MCF 10A (cell line): ENCODE measurements at regions of chr5 and their contacts with region 1.

Region 1: GRCh38 chr5:151651997-151652645 is 34.6 kb downstream of the SPARC start:
- DNase-seq: peak; percentile 94
- H3K4me3 Mint-ChIP-seq: no peak overlapping the region
- H3K27ac Mint-ChIP-seq: no peak overlapping the region
- H3K4me1 Mint-ChIP-seq: peaks cover 10% of the 10 kb centered on the region
- H3K27me3 Mint-ChIP-seq: no peaks in the 10 kb centered on the region
- CTCF ChIP-seq: peak; percentile 99

Region 2: DNA sequence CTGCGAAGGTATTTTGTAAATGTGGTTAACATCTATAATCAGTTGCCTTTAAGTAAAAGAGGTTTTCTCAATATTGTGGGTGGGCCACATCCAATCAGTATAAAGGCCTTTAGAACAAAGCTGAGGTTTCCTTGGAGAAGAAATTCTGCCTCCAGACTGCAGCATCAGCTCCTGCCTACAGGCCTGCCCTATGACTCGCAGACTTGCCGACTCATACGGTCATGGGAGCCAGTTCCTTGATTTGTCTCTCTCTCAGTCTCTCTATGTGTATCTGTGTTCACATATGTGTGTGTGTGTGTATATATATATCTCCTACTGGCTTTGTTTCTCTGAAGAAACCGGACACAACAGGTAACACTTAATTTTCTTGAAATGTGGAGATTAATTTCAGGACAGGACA is 159.4 kb before region 1 on chr5:
- CTCF ChIA-PET with region 1: interaction called, 71 read pairs
- POLR2A ChIA-PET with region 1: no interaction called
- intact Hi-C with region 1: loop called (anchors 2 kb)
- DNase-seq: peak; percentile 22
- H3K4me3 Mint-ChIP-seq: no peak overlapping the region
- H3K27ac Mint-ChIP-seq: no peak overlapping the region
- H3K4me1 Mint-ChIP-seq: no peaks in the 10 kb centered on the region
- H3K27me3 Mint-ChIP-seq: no peaks in the 10 kb centered on the region
- CTCF ChIP-seq: no peak

Region 3: GRCh38 chr5:151534350-151534749 is 117.8 kb before region 1 on chr5:
- CTCF ChIA-PET with region 1: interaction called, 12 read pairs
- POLR2A ChIA-PET with region 1: no interaction called
- intact Hi-C with region 1: no loop called
- DNase-seq: no peak
- H3K4me3 Mint-ChIP-seq: no peak overlapping the region
- H3K27ac Mint-ChIP-seq: no peak overlapping the region
- H3K4me1 Mint-ChIP-seq: no peaks in the 10 kb centered on the region
- H3K27me3 Mint-ChIP-seq: no peaks in the 10 kb centered on the region
- CTCF ChIP-seq: no peak

Region 4: DNA sequence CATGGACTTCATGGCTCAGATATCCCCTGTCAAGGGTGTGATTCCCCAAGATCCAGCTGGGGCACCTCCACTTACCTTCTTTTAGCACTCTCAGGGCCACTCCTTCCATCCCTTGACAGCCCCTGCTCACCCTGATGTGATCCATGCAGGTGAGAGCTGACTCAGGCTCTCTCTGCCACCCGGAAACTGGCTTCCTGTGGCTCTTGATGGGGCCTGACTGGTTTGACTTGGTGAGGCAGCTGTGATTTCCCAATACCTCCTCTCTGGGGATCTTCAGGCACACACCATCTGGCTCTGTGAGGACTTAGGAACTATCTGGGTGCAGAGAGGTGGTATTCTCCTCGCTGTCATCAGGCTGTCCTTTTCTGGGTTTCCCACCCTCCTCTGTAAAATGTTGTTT is 53.1 kb before region 1 on chr5:
- CTCF ChIA-PET with region 1: interaction called, 19 read pairs
- POLR2A ChIA-PET with region 1: interaction called, 3 read pairs
- intact Hi-C with region 1: no loop called
- DNase-seq: peak; percentile 70
- H3K4me3 Mint-ChIP-seq: no peak overlapping the region
- H3K27ac Mint-ChIP-seq: no peak overlapping the region
- H3K4me1 Mint-ChIP-seq: peaks cover 27% of the 10 kb centered on the region
- H3K27me3 Mint-ChIP-seq: no peaks in the 10 kb centered on the region
- CTCF ChIP-seq: no peak

Region 5: GRCh38 chr5:151675611-151676313 is 23.6 kb after region 1 on chr5:
- CTCF ChIA-PET with region 1: interaction called, 94 read pairs
- POLR2A ChIA-PET with region 1: no interaction called
- intact Hi-C with region 1: no loop called
- DNase-seq: no peak
- H3K4me3 Mint-ChIP-seq: no peak overlapping the region
- H3K27ac Mint-ChIP-seq: no peak overlapping the region
- H3K4me1 Mint-ChIP-seq: peaks cover 13% of the 10 kb centered on the region
- H3K27me3 Mint-ChIP-seq: no peaks in the 10 kb centered on the region
- CTCF ChIP-seq: no peak

Region 6: GRCh38 chr5:151771259-151772028 is 119.3 kb after region 1 on chr5 and contains the start of gene G3BP1:
- CTCF ChIA-PET with region 1: interaction called, 22 read pairs
- POLR2A ChIA-PET with region 1: interaction called, 35 read pairs
- intact Hi-C with region 1: no loop called
- DNase-seq: peak; percentile 100
- H3K4me3 Mint-ChIP-seq: no peak within 1 kb of the TSS
- H3K27ac Mint-ChIP-seq: no peak within 1 kb of the TSS
- H3K4me1 Mint-ChIP-seq: peaks cover 13% of the 10 kb centered on the region
- H3K27me3 Mint-ChIP-seq: no peaks in the 10 kb centered on the region
- CTCF ChIP-seq: peak; percentile 67
- total RNA-seq, gene G3BP1: 279 and 282 TPM in 2 replicates